ENCODE measurements at regions of chr2 and their contacts with region 1.

Region 1: GRCh38 chr2:16756831-16757644 is 91.4 kb upstream of the CYRIA start:
- DNase-seq: peak; percentile 79
- H3K4me3 ChIP-seq: no peak overlapping the region
- H3K27ac ChIP-seq: no peak overlapping the region
- H3K4me1 ChIP-seq: peaks cover 4% of the 10 kb centered on the region
- CTCF ChIP-seq: peak; percentile 96

Region 2: GRCh38 chr2:15636972-15637785 is 1119.9 kb before region 1 on chr2:
- CTCF ChIA-PET with region 1: no interaction called
- POLR2A ChIA-PET with region 1: no interaction called
- intact Hi-C with region 1: loop called (anchors 10 kb)
- DNase-seq: peak; percentile 60
- H3K4me3 ChIP-seq: no peak overlapping the region
- H3K27ac ChIP-seq: no peak overlapping the region
- H3K4me1 ChIP-seq: no peaks in the 10 kb centered on the region
- CTCF ChIP-seq: peak; percentile 97

Region 3: DNA sequence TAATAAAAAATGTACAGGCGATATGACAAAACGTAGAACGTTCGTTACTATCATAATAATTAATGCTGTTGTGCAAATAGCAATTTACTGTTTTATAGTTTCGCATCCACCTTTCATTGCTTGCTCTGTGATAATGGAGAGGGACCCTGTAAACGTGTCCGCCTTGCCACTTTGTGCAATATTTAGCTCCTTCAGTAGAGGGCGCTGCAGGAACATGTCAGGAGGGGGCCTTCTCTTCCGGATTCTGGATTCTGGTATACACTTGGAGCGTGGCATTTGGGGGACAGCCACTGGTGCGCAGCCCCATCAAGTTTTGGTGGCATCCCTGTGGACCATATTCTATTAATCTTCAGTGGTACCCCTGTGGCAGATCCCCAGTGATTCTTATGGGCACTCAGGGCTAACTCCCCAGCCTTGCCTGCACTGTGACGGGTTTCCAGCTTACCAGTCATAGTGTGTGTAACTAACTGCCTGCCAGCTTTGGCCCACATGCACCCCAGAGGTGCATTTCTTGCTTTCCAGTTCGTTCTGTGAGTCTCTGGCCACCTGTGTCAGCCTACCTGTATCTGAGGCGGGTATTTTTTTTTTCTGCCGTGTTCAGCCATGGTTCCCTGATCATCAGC is 231.7 kb before region 1 on chr2:
- CTCF ChIA-PET with region 1: no interaction called
- POLR2A ChIA-PET with region 1: no interaction called
- intact Hi-C with region 1: loop called (anchors 1 kb)
- DNase-seq: peak; percentile 44
- H3K4me3 ChIP-seq: no peak overlapping the region
- H3K27ac ChIP-seq: no peak overlapping the region
- H3K4me1 ChIP-seq: no peaks in the 10 kb centered on the region
- CTCF ChIP-seq: peak; percentile 90

Region 4: DNA sequence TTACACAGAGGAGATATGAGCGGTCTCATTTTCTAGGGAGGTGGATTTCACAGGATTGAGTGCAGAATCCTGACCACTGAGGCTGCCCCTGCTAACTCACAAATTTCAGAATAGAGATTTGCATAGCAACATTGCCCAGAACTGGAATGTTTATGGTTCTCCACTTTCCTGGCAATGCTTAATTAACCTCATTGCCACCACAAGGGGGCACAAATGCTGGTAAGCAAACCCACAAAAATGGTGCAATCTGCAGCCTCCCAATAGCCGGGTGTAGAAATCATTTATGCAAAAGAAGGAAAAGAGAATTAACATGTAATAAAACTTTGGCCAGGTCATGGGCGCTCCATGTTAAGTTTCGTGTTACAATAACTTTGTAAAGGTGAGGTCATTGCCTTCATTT is 203.8 kb before region 1 on chr2:
- CTCF ChIA-PET with region 1: no interaction called
- POLR2A ChIA-PET with region 1: no interaction called
- intact Hi-C with region 1: loop called (anchors 2 kb)
- DNase-seq: peak; percentile 59
- H3K4me3 ChIP-seq: no peak overlapping the region
- H3K27ac ChIP-seq: no peak overlapping the region
- H3K4me1 ChIP-seq: no peaks in the 10 kb centered on the region
- CTCF ChIP-seq: peak; percentile 87

Region 5: DNA sequence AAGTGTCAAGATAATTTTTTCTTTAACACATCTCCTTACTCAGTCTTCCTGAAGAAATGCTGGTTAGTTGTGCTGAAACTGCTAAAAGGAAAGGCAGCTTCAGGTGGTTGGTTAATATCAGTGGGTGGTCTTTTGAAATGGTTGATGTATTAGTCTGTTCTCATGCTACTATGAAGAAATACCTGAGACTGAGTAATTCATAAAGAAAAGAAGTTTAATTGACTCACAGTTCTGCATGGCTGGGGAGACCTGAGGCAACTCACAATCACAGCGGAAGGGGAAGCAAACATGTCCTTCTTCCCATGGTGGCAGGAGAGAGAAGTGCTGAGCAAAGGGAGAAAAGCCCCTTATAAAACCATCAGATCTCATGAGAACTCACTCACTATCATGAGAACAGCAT is 34.5 kb after region 1 on chr2:
- CTCF ChIA-PET with region 1: no interaction called
- POLR2A ChIA-PET with region 1: no interaction called
- intact Hi-C with region 1: no loop called
- DNase-seq: no peak
- H3K4me3 ChIP-seq: no peak overlapping the region
- H3K27ac ChIP-seq: no peak overlapping the region
- H3K4me1 ChIP-seq: no peaks in the 10 kb centered on the region
- CTCF ChIP-seq: no peak

Measured in OCI-LY7 (cell line).